ENCODE measurements at regions of chr11 and their contacts with region 1.

Region 1: DNA sequence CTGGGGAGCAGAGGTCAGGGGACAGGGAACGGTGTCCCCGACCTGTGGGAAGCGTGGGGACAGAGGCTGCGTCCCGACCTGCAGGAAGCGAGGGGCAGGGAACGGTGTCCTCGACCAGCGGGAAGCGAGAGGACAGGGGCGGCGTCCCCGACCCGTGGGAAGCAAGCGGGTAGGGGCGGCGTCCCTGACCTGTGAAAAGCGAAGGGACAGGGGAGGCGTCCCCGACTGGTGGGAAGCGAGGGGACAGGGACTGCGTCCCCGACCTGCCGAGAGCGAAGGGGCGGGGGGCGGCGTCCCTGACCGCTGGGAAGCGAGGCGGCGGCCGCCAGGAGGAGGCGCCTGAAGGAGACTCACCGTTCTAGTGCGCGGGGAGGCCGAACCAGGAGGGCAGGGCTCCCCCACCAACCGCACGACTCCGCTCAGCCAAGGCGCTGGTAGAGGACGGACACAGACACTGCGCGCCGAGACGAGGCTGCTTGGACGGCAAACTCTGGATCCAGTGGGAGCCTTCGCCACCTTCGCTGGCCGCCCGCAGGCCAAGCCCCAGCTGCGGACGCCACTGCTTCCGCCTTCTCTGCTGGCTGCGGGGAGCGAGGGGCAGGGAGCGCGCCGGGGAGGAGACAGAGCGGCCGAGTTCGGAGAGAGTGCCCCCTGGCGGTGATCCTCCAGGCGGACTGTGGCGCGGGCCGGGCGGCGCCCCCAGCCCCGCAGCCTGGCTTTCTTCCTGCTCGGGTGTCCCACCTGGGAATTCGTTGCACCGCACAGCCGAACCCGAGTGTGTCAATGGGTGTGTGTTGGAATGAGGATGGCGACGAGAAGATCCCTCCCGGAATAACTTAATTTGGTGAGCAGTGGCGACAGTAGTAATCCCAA is at the start of gene TRAF6:
- DNase-seq: peak; percentile 70
- ATAC-seq: peak; percentile 95
- H3K4me3 ChIP-seq: peak within 1 kb of the TSS; percentile 94 to 95
- H3K27ac ChIP-seq: peak within 1 kb of the TSS; percentile 61
- H3K4me1 ChIP-seq: peaks cover 0 to 12% of the 10 kb centered on the region in 2 experiments; a peak in 1 of 4 replicates
- H3K27me3 ChIP-seq: no peaks in the 10 kb centered on the region
- CTCF ChIP-seq: peak; percentile 78 to 89 (median 82)
- POLR2A ChIP-seq: peak; percentile 44
- RAD21 ChIP-seq: no peak
- total RNA-seq, gene TRAF6: 9.3 TPM

Region 2: GRCh38 chr11:36313750-36314433 is 196.0 kb before region 1 on chr11:
- CTCF ChIA-PET with region 1: no interaction called
- POLR2A ChIA-PET with region 1: no interaction called
- RAD21 ChIA-PET with region 1: no interaction called
- intact Hi-C with region 1: no loop called
- DNase-seq: no peak
- ATAC-seq: no peak
- H3K4me3 ChIP-seq: no peak overlapping the region
- H3K27ac ChIP-seq: no peak overlapping the region
- H3K4me1 ChIP-seq: peaks cover 0 to 6% of the 10 kb centered on the region in 2 experiments; a peak in 1 of 4 replicates
- H3K27me3 ChIP-seq: peaks cover 66% of the 10 kb centered on the region
- CTCF ChIP-seq: no peak
- POLR2A ChIP-seq: no peak
- RAD21 ChIP-seq: no peak

Region 3: DNA sequence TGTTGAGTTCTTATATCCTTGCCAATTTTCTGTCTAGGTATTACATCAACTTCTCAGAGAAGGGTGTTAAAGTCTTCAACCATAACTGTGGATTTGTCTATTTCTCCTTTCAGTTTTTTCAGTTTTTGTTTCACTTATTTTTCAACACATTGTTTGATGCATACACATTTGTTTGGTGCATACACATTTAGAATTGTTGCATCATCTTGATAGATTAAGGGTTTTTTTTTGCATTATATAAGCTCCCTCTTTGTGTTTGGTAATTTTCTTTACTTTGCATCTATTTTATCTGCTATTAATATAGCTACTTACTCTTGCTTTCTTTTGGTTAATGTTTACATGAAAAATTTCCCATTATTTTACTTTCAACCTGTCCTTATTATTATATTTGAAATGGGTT is 20.9 kb after region 1 on chr11:
- CTCF ChIA-PET with region 1: no interaction called
- POLR2A ChIA-PET with region 1: no interaction called
- RAD21 ChIA-PET with region 1: no interaction called
- intact Hi-C with region 1: no loop called
- DNase-seq: no peak
- ATAC-seq: no peak
- H3K4me3 ChIP-seq: no peak overlapping the region
- H3K27ac ChIP-seq: no peak overlapping the region
- H3K4me1 ChIP-seq: no peaks in the 10 kb centered on the region
- H3K27me3 ChIP-seq: no peaks in the 10 kb centered on the region
- CTCF ChIP-seq: no peak
- POLR2A ChIP-seq: no peak
- RAD21 ChIP-seq: no peak

Region 4: GRCh38 chr11:36541001-36541400 is 31.1 kb after region 1 on chr11:
- CTCF ChIA-PET with region 1: interaction called, 5 read pairs
- POLR2A ChIA-PET with region 1: no interaction called
- RAD21 ChIA-PET with region 1: interaction called in 1 of 2 experiments, 3 read pairs
- intact Hi-C with region 1: loop called (anchors 2 kb)
- DNase-seq: peak; percentile 38
- ATAC-seq: peak; percentile 91
- H3K4me3 ChIP-seq: no peak overlapping the region
- H3K27ac ChIP-seq: no peak overlapping the region
- H3K4me1 ChIP-seq: no peaks in the 10 kb centered on the region
- H3K27me3 ChIP-seq: peaks cover 31% of the 10 kb centered on the region; the same call in 1 of the 2 replicates
- CTCF ChIP-seq: peak; percentile 15 to 51 (median 42); a peak in 4 of 6 replicates
- POLR2A ChIP-seq: no peak
- RAD21 ChIP-seq: peak; percentile 57